ENCODE measurements at regions of chr17 and their contacts with region 1.

Region 1: DNA sequence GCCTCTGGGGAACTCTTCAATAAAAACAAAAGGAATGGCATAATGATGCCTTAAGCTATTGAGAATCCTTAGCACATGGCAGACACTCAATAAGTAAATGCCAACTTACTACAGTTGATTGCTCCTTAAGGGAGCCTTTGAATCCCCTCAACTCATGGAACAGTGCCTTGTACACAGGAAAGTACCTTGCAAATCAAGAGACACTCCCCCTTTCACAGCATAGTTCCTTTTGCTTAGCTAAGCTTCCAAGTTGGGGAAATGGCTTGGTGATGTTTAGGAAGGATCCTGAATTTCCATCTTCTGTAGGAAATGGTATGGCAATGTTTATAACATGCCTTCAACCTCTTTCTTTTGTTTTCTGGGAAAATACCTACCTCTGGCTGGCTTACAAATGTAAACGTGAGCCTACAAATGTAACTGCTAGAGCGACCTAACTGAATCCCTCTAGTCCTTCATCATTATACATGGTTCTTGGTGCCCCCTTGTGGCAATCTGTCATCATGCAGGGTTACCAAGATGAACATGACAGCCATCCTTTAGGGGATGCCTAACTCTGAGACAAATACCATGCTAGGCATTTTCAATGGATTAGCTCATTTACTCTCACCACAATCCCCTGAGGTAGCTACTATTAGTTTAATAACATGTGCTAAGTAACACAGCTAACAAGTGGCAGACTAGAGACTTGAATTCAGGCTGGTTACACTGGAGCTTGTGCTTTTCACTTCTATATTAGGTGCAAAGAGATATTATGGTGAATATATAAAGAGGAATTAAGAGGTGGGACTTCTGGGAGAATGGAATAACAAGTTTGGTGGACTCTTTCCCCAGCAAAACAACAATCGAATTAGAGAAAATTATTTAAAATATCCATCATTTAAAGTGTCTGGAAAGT is 65.0 kb downstream of the MMD start:
- DNase-seq: peak; percentile 13
- H3K4me3 ChIP-seq: no peak overlapping the region
- H3K27ac ChIP-seq: no peak overlapping the region
- H3K27me3 ChIP-seq: peaks cover 3% of the 10 kb centered on the region
- CTCF ChIP-seq: peak; percentile 74

Region 2: GRCh38 chr17:55334285-55334684 is 22.4 kb before region 1 on chr17:
- CTCF ChIA-PET with region 1: no interaction called
- POLR2A ChIA-PET with region 1: no interaction called
- DNase-seq: no peak
- H3K4me3 ChIP-seq: no peak overlapping the region
- H3K27ac ChIP-seq: no peak overlapping the region
- H3K27me3 ChIP-seq: peaks cover under 1% of the 10 kb centered on the region
- CTCF ChIP-seq: no peak

Region 3: GRCh38 chr17:55388842-55389241 is 32.2 kb after region 1 on chr17:
- CTCF ChIA-PET with region 1: interaction called, 11 read pairs
- POLR2A ChIA-PET with region 1: no interaction called
- DNase-seq: no peak
- H3K4me3 ChIP-seq: no peak overlapping the region
- H3K27ac ChIP-seq: no peak overlapping the region
- H3K27me3 ChIP-seq: peaks cover 2% of the 10 kb centered on the region
- CTCF ChIP-seq: no peak

Region 4: DNA sequence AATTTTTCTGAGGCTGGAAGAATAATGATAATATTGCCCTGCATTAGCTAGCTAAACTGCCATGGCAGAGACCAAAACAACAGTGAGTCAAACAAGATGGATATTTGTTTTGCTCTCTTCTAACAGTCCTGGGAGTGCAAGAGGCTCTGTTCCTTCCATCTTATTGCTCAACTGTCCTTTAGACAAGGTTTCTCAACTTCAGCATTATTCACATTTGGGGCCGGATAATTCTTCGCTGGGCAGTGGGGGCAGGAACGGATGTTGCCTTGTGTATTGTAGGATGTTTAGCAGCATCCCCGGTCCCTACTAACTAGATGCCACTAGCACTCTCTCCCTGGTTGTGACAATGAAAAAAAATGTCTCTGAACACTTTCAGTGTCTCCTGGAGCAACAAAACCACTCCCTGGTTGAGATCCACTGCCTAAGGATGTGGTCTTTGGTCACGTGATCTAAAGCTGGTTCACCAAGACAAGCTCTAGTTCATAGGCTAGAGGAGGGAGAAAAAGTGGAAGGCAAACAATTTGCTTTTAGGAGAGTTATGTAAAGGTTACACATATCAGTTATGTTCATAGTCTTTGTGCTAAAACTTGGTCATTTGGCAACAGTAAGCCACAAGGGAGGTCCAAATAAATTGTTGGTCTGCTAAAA is 538.6 kb after region 1 on chr17:
- CTCF ChIA-PET with region 1: no interaction called
- POLR2A ChIA-PET with region 1: no interaction called
- DNase-seq: no peak
- H3K4me3 ChIP-seq: no peak overlapping the region
- H3K27ac ChIP-seq: no peak overlapping the region
- H3K27me3 ChIP-seq: no peaks in the 10 kb centered on the region
- CTCF ChIP-seq: no peak